Activated CD4-positive, alpha-beta T cell treated with anti-CD3 and anti-CD28 coated beads for 36 hours (primary cell): ENCODE measurements at regions of chr4 and their contacts with region 1.

Region 1: GRCh38 chr4:123350191-123350544 is 46.4 kb upstream of the SPRY1 start:
- DNase-seq: peak; percentile 11
- ATAC-seq: peak; percentile 30
- H3K4me3 Mint-ChIP-seq: no peak overlapping the region
- H3K27ac Mint-ChIP-seq: no peak overlapping the region
- H3K4me1 Mint-ChIP-seq: peaks cover 10% of the 10 kb centered on the region
- H3K27me3 Mint-ChIP-seq: no peaks in the 10 kb centered on the region

Region 2: DNA sequence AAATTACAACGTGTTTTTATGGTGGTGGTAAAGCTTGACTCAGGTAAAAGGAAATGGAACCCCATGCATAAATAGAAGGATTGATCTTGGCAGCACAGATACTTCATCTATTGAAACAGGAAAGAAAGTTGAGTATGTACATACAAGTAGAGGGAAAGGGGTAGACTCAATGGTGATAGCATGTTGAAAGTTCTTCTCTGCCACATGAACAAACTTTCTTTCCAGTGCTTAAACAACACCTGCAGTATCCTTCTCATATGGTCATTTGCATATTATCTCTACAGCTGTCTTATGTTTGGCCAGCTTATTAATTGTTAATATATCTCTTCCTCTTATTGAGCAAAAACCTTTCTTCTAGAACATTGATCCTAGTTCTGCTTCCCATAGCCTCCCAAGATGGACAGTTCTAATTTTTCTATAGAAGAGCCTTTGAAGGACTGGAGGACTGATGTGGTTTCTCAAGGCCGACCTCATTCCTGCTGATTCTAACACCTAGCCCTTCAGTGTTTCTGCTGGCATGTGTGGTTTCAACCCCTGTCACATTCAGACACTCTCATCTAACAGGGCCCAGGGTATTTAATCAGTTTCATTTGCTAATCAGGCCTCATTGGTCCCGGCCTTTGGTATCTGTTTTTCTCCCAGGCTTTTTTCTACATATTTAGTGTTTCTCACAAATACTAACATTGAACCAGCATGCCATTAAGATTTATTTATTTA is 61.7 kb before region 1 on chr4:
- CTCF ChIA-PET with region 1: no interaction called
- POLR2A ChIA-PET with region 1: no interaction called
- intact Hi-C with region 1: no loop called
- DNase-seq: no peak
- ATAC-seq: no peak
- H3K4me3 Mint-ChIP-seq: no peak overlapping the region
- H3K27ac Mint-ChIP-seq: no peak overlapping the region
- H3K4me1 Mint-ChIP-seq: no peaks in the 10 kb centered on the region
- H3K27me3 Mint-ChIP-seq: no peaks in the 10 kb centered on the region

Region 3: DNA sequence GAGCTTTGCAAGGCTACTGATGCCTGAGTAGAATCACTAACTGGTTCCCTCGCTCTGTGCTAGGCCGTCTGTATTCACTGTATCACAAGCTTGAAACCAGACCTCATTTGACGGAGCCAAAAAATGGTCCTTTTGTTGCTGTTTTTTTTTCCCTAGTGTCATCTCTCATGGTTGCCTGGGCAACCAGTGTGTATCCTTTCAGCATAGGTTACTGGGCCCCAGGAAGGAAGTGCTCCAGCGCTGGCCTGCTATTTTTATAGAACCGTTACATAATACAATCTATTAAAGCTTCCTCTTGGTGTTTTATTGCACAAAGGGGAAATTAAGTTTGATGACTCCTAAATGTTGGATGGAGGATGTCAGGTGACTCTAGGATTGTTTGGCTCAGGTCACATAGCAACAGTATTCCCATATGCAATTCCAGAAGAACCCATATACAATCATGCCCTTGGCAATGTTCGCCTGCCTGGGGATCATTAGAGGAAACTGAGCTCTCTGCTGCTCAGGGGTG is 266.8 kb after region 1 on chr4:
- CTCF ChIA-PET with region 1: no interaction called
- POLR2A ChIA-PET with region 1: interaction called, 10 read pairs
- intact Hi-C with region 1: no loop called
- DNase-seq: peak; percentile 51
- ATAC-seq: peak; percentile 87
- H3K4me3 Mint-ChIP-seq: no peak overlapping the region
- H3K27ac Mint-ChIP-seq: peak overlapping the region; percentile 23
- H3K4me1 Mint-ChIP-seq: peaks cover 15% of the 10 kb centered on the region
- H3K27me3 Mint-ChIP-seq: no peaks in the 10 kb centered on the region